ENCODE measurements at regions of chrX and their contacts with region 1.

Region 1: GRCh38 chrX:107894038-107894437 is 68.4 kb downstream of the MID2 start:
- DNase-seq: peak in 4 of 9 experiments; percentile 0 to 68 (median 46)
- ATAC-seq: peak; percentile 71
- H3K4me3 ChIP-seq: no peak overlapping the region
- H3K4me3 Mint-ChIP-seq: no peak overlapping the region
- H3K27ac ChIP-seq: no peak overlapping the region
- H3K27ac Mint-ChIP-seq: no peak overlapping the region
- H3K4me1 ChIP-seq: no peaks in the 10 kb centered on the region
- H3K4me1 Mint-ChIP-seq: no peaks in the 10 kb centered on the region
- H3K27me3 ChIP-seq: no peaks in the 10 kb centered on the region
- H3K27me3 Mint-ChIP-seq: no peaks in the 10 kb centered on the region
- CTCF ChIP-seq: peak; percentile 63

Region 2: DNA sequence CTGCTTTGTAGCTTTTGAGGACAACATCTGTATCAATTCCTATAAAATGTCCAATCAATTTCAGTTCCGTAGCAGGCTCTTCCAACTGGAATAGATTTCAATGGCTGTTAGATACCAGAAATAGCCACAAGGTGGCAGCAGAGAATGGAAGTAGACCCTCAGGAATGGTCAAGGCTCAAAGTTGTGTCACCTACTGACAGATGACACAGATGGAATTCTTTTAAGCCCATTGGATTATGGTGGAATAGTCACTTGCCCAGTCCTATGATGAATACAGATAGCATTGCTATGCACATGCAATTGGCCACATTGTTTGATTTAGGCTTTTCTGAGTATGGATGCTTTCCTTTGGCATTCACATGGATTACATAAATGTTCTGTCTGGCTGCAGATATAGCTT is 1412.7 kb before region 1 on chrX:
- CTCF ChIA-PET with region 1: no interaction called
- POLR2A ChIA-PET with region 1: no interaction called
- intact Hi-C with region 1: loop called in 1 of 2 experiments (anchors 10 kb)
- DNase-seq: peak in 5 of 9 experiments; percentile 19 to 56 (median 51)
- ATAC-seq: no peak
- H3K4me3 ChIP-seq: no peak overlapping the region
- H3K4me3 Mint-ChIP-seq: no peak overlapping the region
- H3K27ac ChIP-seq: no peak overlapping the region
- H3K27ac Mint-ChIP-seq: no peak overlapping the region
- H3K4me1 ChIP-seq: peaks cover 10% of the 10 kb centered on the region
- H3K4me1 Mint-ChIP-seq: peaks cover 17% of the 10 kb centered on the region
- H3K27me3 ChIP-seq: no peaks in the 10 kb centered on the region
- H3K27me3 Mint-ChIP-seq: no peaks in the 10 kb centered on the region
- CTCF ChIP-seq: peak; percentile 54

Region 3: DNA sequence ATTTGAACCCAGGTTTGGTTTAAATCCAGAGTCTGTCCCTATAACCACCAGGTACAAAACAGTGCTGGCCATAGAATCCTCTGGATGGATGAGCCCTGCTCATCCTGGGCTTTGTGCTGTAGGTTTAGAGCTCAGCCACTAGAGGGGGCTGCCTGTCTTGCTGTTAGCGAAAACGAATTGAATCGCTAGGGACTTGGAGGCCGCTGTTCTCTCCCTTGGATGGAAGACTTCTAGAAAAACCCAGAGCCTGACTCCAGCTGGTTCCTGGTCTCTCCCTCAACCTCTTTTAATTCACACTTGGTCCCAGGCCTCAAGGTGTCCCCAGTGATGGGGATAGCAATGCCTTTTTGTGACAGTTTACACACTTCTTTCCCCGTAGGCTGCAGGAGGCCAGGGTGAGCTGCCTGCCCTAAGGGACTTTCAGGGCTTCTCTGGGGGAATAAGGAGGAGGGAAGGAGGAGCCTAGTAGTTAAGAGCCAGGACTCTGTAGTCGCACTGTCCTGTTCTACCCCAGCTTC is 999.6 kb before region 1 on chrX:
- CTCF ChIA-PET with region 1: interaction called, 3 read pairs
- POLR2A ChIA-PET with region 1: no interaction called
- intact Hi-C with region 1: loop called in 1 of 2 experiments (anchors 2 kb)
- DNase-seq: peak in 8 of 9 experiments; percentile 6 to 59 (median 48)
- ATAC-seq: peak; percentile 61
- H3K4me3 ChIP-seq: no peak overlapping the region
- H3K4me3 Mint-ChIP-seq: no peak overlapping the region
- H3K27ac ChIP-seq: no peak overlapping the region
- H3K27ac Mint-ChIP-seq: no peak overlapping the region
- H3K4me1 ChIP-seq: no peaks in the 10 kb centered on the region
- H3K4me1 Mint-ChIP-seq: no peaks in the 10 kb centered on the region
- H3K27me3 ChIP-seq: no peaks in the 10 kb centered on the region
- H3K27me3 Mint-ChIP-seq: peaks cover 4% of the 10 kb centered on the region
- CTCF ChIP-seq: peak; percentile 47

Region 4: GRCh38 chrX:107025545-107025944 is 868.5 kb before region 1 on chrX:
- CTCF ChIA-PET with region 1: no interaction called
- POLR2A ChIA-PET with region 1: no interaction called
- intact Hi-C with region 1: loop called in 1 of 2 experiments (anchors 10 kb)
- DNase-seq: peak in 2 of 9 experiments; percentile 15 to 30
- ATAC-seq: no peak
- H3K4me3 ChIP-seq: no peak overlapping the region
- H3K4me3 Mint-ChIP-seq: no peak overlapping the region
- H3K27ac ChIP-seq: no peak overlapping the region
- H3K27ac Mint-ChIP-seq: no peak overlapping the region
- H3K4me1 ChIP-seq: no peaks in the 10 kb centered on the region
- H3K4me1 Mint-ChIP-seq: no peaks in the 10 kb centered on the region
- H3K27me3 ChIP-seq: no peaks in the 10 kb centered on the region
- H3K27me3 Mint-ChIP-seq: peaks cover 4% of the 10 kb centered on the region
- CTCF ChIP-seq: no peak

Region 5: GRCh38 chrX:107654872-107655761 is 238.9 kb before region 1 on chrX:
- CTCF ChIA-PET with region 1: interaction called, 4 read pairs
- POLR2A ChIA-PET with region 1: no interaction called
- intact Hi-C with region 1: loop called (anchors 1 to 2 kb)
- DNase-seq: peak in 8 of 9 experiments; percentile 46 to 81 (median 69)
- ATAC-seq: peak; percentile 87
- H3K4me3 ChIP-seq: no peak overlapping the region
- H3K4me3 Mint-ChIP-seq: no peak overlapping the region
- H3K27ac ChIP-seq: no peak overlapping the region
- H3K27ac Mint-ChIP-seq: peak overlapping the region; percentile 57
- H3K4me1 ChIP-seq: peaks cover 11% of the 10 kb centered on the region
- H3K4me1 Mint-ChIP-seq: peaks cover 18% of the 10 kb centered on the region
- H3K27me3 ChIP-seq: peaks cover 0 to 2% of the 10 kb centered on the region in 2 experiments
- H3K27me3 Mint-ChIP-seq: no peaks in the 10 kb centered on the region
- CTCF ChIP-seq: peak; percentile 55

Region 6: DNA sequence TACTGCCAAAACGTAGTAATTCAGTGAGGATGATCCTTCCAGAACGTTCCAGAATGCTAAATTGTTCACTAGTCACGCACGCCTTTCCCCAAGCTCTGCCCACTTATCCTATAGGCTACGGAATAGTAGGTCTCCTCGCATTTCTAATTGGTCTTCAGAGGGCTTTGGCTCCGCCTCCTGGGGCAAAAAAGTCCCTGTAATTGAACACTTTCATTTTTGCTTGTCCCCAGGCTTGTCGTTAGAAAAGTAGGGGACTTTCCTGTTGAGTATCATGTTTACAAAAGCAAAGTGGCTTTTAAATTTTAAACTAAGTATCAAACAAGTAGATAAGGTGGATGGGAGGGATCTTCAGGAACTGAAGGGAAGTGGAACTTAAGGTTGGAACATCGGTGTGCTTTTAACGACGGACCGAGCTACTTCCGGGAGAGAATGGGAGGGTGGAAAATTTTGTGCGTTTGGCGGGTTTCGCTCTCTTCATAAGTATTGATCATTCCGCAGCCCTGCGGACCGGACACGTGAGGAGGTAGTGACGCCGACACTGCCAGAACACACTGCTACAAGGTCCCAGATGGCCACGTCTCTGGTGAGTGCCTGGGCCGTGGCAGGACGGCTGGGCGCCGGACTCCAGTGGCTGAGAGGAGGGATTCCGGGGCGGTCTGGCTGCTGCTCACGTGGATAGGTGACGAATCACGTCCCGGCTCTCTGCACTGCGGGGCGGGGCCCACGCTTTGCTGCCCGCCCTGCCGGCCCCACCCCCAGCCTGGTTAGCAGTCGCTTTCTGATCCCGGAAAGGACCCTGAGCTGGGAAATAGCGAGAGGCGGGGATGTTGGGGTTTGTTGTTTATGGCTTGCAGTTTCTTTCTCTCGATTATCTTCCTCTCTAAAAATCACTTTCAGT is 1642.7 kb after region 1 on chrX and contains the start of gene NXT2:
- CTCF ChIA-PET with region 1: no interaction called
- POLR2A ChIA-PET with region 1: no interaction called
- intact Hi-C with region 1: loop called in 1 of 2 experiments (anchors 5 kb)
- DNase-seq: peak; percentile 68 to 93 (median 84)
- ATAC-seq: peak; percentile 98
- H3K4me3 ChIP-seq: peak within 1 kb of the TSS; percentile 74 to 80
- H3K4me3 Mint-ChIP-seq: peak within 1 kb of the TSS; percentile 96
- H3K27ac ChIP-seq: peak within 1 kb of the TSS; percentile 72 to 91
- H3K27ac Mint-ChIP-seq: peak within 1 kb of the TSS; percentile 98
- H3K4me1 ChIP-seq: no peaks in the 10 kb centered on the region
- H3K4me1 Mint-ChIP-seq: peaks cover 17% of the 10 kb centered on the region
- H3K27me3 ChIP-seq: no peaks in the 10 kb centered on the region
- H3K27me3 Mint-ChIP-seq: peaks cover 13% of the 10 kb centered on the region
- CTCF ChIP-seq: no peak
- total RNA-seq, gene NXT2: 4.5 to 4.6 TPM

Measured in CD8-positive, alpha-beta T cell (primary cell).